K562 (cell line): ENCODE measurements at regions of chr19 and their contacts with region 1.

Region 1: GRCh38 chr19:48255376-48256303 is at the start of gene CARD8:
- DNase-seq: peak; percentile 66 to 93 (median 76)
- ATAC-seq: peak; percentile 88
- H3K4me3 ChIP-seq: peak within 1 kb of the TSS; percentile 63
- H3K27ac ChIP-seq: peak within 1 kb of the TSS; percentile 99
- H3K4me1 ChIP-seq: peaks cover 16 to 30% of the 10 kb centered on the region in 2 experiments; a peak in 4 of 5 replicates
- H3K27me3 ChIP-seq: no peaks in the 10 kb centered on the region
- CTCF ChIP-seq: 0 out of 6 replicates have a peak, but pooled peaks of 1 of the 3 experiments have one; percentile 4
- EP300 ChIP-seq: no peak
- POLR2A ChIP-seq: peak; percentile 97
- RAD21 ChIP-seq: 0 out of 4 replicates have a peak, but pooled peaks of 1 of the 2 experiments have one; percentile 3
- polyA plus RNA-seq, gene CARD8: 17.4 to 18.3 TPM

Region 2: GRCh38 chr19:47973529-47973928 is 282.1 kb before region 1 on chr19:
- CTCF ChIA-PET with region 1: no interaction called
- POLR2A ChIA-PET with region 1: no interaction called
- in situ Hi-C with region 1: loop called (anchors 10 kb)
- intact Hi-C with region 1: no loop called
- DNase-seq: no peak
- ATAC-seq: no peak
- H3K4me3 ChIP-seq: no peak overlapping the region
- H3K27ac ChIP-seq: no peak overlapping the region
- H3K4me1 ChIP-seq: no peaks in the 10 kb centered on the region; a peak in 1 of 5 replicates
- H3K27me3 ChIP-seq: peaks cover 3 to 22% of the 10 kb centered on the region in 2 experiments
- CTCF ChIP-seq: no peak
- EP300 ChIP-seq: no peak
- POLR2A ChIP-seq: no peak
- RAD21 ChIP-seq: no peak

Region 3: GRCh38 chr19:48110350-48110966 is 145.2 kb before region 1 on chr19 and contains the start of gene PLA2G4C:
- CTCF ChIA-PET with region 1: interaction called, 5 read pairs
- POLR2A ChIA-PET with region 1: interaction called, 4 read pairs
- in situ Hi-C with region 1: no loop called
- intact Hi-C with region 1: loop called (anchors 1 kb)
- DNase-seq: peak; percentile 92 to 97 (median 92)
- ATAC-seq: peak; percentile 85
- H3K4me3 ChIP-seq: peak within 1 kb of the TSS; percentile 41
- H3K27ac ChIP-seq: peak within 1 kb of the TSS; percentile 54
- H3K4me1 ChIP-seq: peaks cover 8 to 13% of the 10 kb centered on the region in 2 experiments; a peak in 4 of 5 replicates
- H3K27me3 ChIP-seq: no peaks in the 10 kb centered on the region
- CTCF ChIP-seq: no peak
- EP300 ChIP-seq: no peak
- POLR2A ChIP-seq: peak; percentile 67
- RAD21 ChIP-seq: no peak
- polyA plus RNA-seq, gene PLA2G4C: not detected

Region 4: DNA sequence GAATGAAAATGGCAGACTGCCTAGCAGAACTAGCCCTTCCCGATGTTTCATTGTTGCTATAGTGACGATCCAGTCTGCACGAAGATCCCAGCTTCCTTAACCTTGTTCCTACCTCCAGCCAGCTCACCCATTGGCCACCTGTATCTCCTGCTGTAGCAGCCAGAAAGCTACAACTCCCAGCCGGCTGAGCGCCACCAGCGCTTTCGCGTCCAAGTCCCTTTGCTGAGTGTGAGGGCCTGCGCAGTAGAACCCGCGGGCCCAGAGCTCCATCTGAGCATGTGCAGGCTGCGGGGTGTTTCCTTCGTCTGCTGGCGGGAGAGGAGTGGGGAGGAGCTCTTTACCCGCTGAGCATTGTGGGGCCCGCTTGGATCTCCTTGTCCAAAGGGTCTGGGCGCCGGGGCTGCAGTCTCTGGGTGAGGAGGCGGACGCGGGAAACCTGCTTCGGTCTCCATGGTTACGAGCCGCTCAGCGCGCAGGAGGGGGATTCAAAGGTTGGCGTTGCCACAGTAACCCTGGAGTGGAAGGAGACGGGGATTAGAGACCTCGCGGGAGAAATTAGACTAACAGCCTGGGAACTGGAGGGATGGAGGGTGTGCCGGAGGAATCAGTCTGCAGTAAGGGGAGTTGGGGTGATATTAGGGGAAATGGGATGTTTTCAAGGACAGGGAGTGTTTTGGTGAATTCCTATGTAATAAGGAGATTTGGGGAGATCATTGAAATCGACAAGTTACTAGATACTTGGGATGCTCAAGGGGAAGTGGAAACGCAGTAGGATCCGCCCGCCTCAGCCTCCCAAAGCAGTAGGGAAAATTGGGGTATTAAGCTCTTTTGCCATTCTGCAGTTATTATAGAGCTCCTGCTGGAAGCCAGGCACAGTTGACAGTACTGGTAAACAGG is 51.7 kb before region 1 on chr19:
- CTCF ChIA-PET with region 1: no interaction called
- POLR2A ChIA-PET with region 1: interaction called, 12 read pairs
- in situ Hi-C with region 1: no loop called
- intact Hi-C with region 1: loop called (anchors 5 kb)
- DNase-seq: peak; percentile 93 to 98 (median 96)
- ATAC-seq: peak; percentile 100
- H3K4me3 ChIP-seq: peak overlapping the region; percentile 55
- H3K27ac ChIP-seq: peak overlapping the region; percentile 75
- H3K4me1 ChIP-seq: peaks cover 8 to 17% of the 10 kb centered on the region in 2 experiments; a peak in 3 of 5 replicates
- H3K27me3 ChIP-seq: no peaks in the 10 kb centered on the region
- CTCF ChIP-seq: no peak
- EP300 ChIP-seq: no peak
- POLR2A ChIP-seq: peak; percentile 84
- RAD21 ChIP-seq: peak in 1 of 2 experiments; percentile 4; a peak in 1 of 4 replicates

Region 5: GRCh38 chr19:48216933-48217332 is 38.7 kb before region 1 on chr19:
- CTCF ChIA-PET with region 1: no interaction called
- POLR2A ChIA-PET with region 1: no interaction called
- in situ Hi-C with region 1: no loop called
- intact Hi-C with region 1: loop called (anchors 2 kb)
- DNase-seq: peak in 1 of 4 experiments; percentile 50
- ATAC-seq: peak; percentile 80
- H3K4me3 ChIP-seq: no peak overlapping the region
- H3K27ac ChIP-seq: no peak overlapping the region
- H3K4me1 ChIP-seq: no peaks in the 10 kb centered on the region; a peak in 1 of 5 replicates
- H3K27me3 ChIP-seq: no peaks in the 10 kb centered on the region
- CTCF ChIP-seq: peak; percentile 51 to 59 (median 54)
- EP300 ChIP-seq: no peak
- POLR2A ChIP-seq: no peak
- RAD21 ChIP-seq: peak; percentile 14 to 58; a peak in 3 of 4 replicates

Region 6: DNA sequence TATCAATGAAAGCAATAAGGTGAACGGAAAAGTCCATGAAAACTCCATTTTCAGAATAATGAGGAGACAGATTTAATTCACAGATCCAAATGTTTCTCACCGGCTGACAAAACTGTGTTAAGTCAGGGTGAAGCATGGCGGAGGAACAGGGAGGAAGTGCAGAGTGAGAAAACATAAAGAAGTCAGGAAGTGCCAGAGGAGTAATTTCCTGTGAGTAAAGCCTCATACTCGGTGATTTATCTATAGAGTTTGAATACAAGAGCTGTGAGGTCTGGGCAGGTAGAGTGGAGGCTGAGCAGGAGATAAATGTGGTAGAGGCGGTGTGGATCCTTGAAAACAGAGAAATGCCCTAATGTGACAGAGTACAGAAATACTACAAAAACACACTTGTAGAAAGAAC is 11.4 kb before region 1 on chr19:
- CTCF ChIA-PET with region 1: no interaction called
- POLR2A ChIA-PET with region 1: interaction called, 11 read pairs
- in situ Hi-C with region 1: no loop called
- intact Hi-C with region 1: no loop called
- DNase-seq: no peak
- ATAC-seq: no peak
- H3K4me3 ChIP-seq: no peak overlapping the region
- H3K27ac ChIP-seq: no peak overlapping the region
- H3K4me1 ChIP-seq: peaks cover 0 to 9% of the 10 kb centered on the region in 2 experiments; a peak in 3 of 5 replicates
- H3K27me3 ChIP-seq: no peaks in the 10 kb centered on the region
- CTCF ChIP-seq: no peak
- EP300 ChIP-seq: no peak
- POLR2A ChIP-seq: no peak
- RAD21 ChIP-seq: no peak